Panc1 (cell line): ENCODE measurements at regions of chr4 and their contacts with region 1.

Region 1: DNA sequence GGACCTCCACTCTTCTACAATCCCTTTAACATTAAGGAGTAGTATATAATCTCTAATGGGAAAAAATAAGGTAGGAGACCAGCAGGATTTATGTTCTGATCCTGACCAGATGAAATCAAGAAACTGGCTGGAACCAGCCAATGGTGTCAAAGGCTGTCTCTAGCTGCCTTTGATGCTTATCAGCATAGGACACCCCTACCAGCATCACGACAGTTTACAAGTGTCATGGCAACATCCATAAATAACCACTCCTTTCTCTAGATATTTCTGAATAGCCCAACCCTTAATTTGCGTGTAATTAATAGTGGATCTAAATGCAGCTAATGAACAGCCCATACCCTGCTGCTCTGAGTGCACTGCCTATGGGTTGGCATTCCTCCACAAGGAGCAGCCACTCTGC is 41.8 kb downstream of the COX7B2 start:
- DNase-seq: no peak
- ATAC-seq: no peak
- H3K4me3 ChIP-seq: no peak overlapping the region
- H3K27ac ChIP-seq: no peak overlapping the region
- H3K4me1 ChIP-seq: no peaks in the 10 kb centered on the region
- H3K27me3 ChIP-seq: no peaks in the 10 kb centered on the region
- CTCF ChIP-seq: no peak

Region 2: DNA sequence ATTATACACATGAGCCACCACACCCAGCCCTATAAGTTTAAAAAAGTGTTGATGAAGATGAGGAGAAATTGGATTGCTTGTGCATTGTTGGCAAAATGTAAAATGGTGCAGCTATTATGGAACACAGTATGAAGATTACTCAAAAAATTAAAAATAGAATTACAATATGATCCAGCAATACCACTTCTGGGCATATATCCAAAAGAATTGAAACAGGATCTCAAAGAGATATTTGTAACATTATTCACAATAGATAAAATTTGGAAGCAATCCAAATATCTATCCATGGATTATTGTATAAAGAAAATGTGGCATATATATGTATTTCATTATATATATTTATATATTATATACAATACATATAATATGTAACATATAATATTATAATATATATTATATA is 1625.3 kb before region 1 on chr4:
- CTCF ChIA-PET with region 1: interaction called, 10 read pairs
- POLR2A ChIA-PET with region 1: no interaction called
- in situ Hi-C with region 1: no loop called
- intact Hi-C with region 1: no loop called
- DNase-seq: no peak
- ATAC-seq: no peak
- H3K4me3 ChIP-seq: no peak overlapping the region
- H3K27ac ChIP-seq: no peak overlapping the region
- H3K4me1 ChIP-seq: no peaks in the 10 kb centered on the region
- H3K27me3 ChIP-seq: no peaks in the 10 kb centered on the region
- CTCF ChIP-seq: no peak